ENCODE measurements at regions of chr17 and their contacts with region 1.

Region 1: GRCh38 chr17:44044067-44044466 is 22.4 kb downstream of the LSM12 start:
- DNase-seq: no peak
- ATAC-seq: no peak
- H3K4me3 ChIP-seq: no peak overlapping the region
- H3K4me3 Mint-ChIP-seq: no peak overlapping the region
- H3K27ac ChIP-seq: no peak overlapping the region
- H3K27ac Mint-ChIP-seq: no peak overlapping the region
- H3K4me1 ChIP-seq: no peaks in the 10 kb centered on the region
- H3K4me1 Mint-ChIP-seq: peaks cover 9% of the 10 kb centered on the region
- H3K27me3 ChIP-seq: no peaks in the 10 kb centered on the region
- H3K27me3 Mint-ChIP-seq: no peaks in the 10 kb centered on the region
- CTCF ChIP-seq: no peak

Region 2: DNA sequence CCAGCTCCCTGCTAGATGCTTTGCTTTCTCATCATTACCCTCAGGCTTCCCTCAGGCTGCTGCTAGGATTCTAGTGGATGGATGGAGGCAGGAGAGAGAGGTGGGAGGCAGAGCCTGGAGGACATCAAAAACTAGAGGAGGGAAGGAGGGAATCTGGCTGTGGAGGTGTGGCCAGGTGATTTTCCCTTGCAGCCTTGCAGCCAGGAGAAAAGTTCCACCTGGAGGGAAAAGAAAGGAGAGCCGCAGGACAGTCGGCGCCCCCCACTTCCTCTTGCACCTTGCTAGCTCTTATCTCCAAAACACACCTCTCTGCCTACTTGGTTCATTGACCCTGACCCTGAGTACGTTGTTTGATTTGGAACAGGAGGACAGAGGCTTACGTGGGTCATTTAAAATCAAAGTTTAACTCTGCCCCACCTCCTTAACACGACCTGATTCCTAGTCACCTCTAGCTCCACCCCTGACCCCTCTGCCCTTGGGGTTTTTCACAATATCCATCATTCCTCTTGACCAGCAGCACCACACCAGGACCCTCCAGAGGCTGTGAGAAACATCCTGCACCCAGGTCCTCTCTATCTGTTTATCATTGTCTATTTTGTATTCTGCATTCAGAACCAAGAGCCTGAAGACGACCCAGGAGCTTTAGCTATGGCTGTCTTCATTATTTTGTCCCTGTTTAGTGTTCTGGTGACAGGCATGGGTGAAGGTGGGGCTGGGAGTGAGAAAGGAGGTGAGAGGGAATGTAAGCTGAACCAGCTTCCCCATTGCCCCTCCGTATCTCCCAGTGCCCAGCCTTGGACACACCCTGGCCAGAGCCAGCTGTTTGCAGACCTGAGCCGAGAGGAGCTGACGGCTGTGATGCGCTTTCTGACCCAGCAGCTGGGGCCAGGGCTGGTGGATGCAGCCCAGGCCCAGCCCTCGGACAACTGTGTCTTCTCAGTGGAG is 1177.2 kb before region 1 on chr17:
- CTCF ChIA-PET with region 1: no interaction called
- POLR2A ChIA-PET with region 1: no interaction called
- intact Hi-C with region 1: no loop called
- DNase-seq: no peak
- ATAC-seq: no peak
- H3K4me3 ChIP-seq: no peak overlapping the region
- H3K4me3 Mint-ChIP-seq: no peak overlapping the region
- H3K27ac ChIP-seq: no peak overlapping the region
- H3K27ac Mint-ChIP-seq: no peak overlapping the region
- H3K4me1 ChIP-seq: no peaks in the 10 kb centered on the region
- H3K4me1 Mint-ChIP-seq: no peaks in the 10 kb centered on the region
- H3K27me3 ChIP-seq: peaks cover 0 to 11% (median 0%) of the 10 kb centered on the region in 4 experiments
- H3K27me3 Mint-ChIP-seq: peaks cover 27% of the 10 kb centered on the region
- CTCF ChIP-seq: no peak

Region 3: DNA sequence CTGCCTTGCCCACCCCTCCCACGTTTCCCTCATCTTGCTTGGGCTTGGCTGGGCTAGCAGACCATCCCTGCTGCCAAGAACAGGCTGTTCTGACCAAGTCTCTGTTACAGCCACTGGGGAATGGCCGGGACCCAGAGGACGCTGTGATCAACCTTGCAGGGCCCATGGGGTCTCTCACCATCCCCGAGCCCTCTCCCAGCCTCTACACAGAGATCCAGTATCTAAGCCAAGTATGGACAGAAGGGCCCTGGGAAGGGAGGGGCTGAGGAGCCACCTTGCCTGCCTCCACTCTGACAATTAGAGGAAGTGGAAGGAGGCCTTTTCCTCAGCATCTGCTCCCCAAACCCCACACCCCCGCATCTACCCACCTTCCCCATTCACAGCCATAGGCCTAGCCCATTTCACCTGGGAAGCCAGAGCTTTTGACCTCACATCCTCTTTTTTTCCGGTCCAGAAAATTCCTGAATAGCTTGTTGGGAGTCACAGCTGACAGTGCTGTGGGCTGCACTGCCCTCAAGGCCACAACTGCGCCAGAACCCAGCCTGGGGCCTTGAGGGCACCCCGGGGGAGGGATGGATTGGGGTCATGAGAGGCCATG is 182.9 kb before region 1 on chr17:
- CTCF ChIA-PET with region 1: no interaction called
- POLR2A ChIA-PET with region 1: no interaction called
- intact Hi-C with region 1: no loop called
- DNase-seq: no peak
- ATAC-seq: no peak
- H3K4me3 ChIP-seq: no peak overlapping the region
- H3K4me3 Mint-ChIP-seq: no peak overlapping the region
- H3K27ac ChIP-seq: no peak overlapping the region
- H3K27ac Mint-ChIP-seq: no peak overlapping the region
- H3K4me1 ChIP-seq: no peaks in the 10 kb centered on the region
- H3K4me1 Mint-ChIP-seq: no peaks in the 10 kb centered on the region
- H3K27me3 ChIP-seq: peaks cover 0 to 23% (median 2%) of the 10 kb centered on the region in 4 experiments
- H3K27me3 Mint-ChIP-seq: peaks cover 38% of the 10 kb centered on the region
- CTCF ChIP-seq: no peak

Region 4: GRCh38 chr17:43878260-43879175 is 165.5 kb before region 1 on chr17:
- CTCF ChIA-PET with region 1: interaction called, 11 read pairs
- POLR2A ChIA-PET with region 1: no interaction called
- intact Hi-C with region 1: no loop called
- DNase-seq: peak; percentile 76
- ATAC-seq: peak; percentile 93
- H3K4me3 ChIP-seq: no peak overlapping the region
- H3K4me3 Mint-ChIP-seq: no peak overlapping the region
- H3K27ac ChIP-seq: no peak overlapping the region
- H3K27ac Mint-ChIP-seq: no peak overlapping the region
- H3K4me1 ChIP-seq: peaks cover 0 to 3% of the 10 kb centered on the region in 2 donors
- H3K4me1 Mint-ChIP-seq: no peaks in the 10 kb centered on the region
- H3K27me3 ChIP-seq: peaks cover 0 to 22% (median 3%) of the 10 kb centered on the region in 4 experiments
- H3K27me3 Mint-ChIP-seq: peaks cover 26% of the 10 kb centered on the region
- CTCF ChIP-seq: peak; percentile 98

Region 5: GRCh38 chr17:43909537-43910231 is 134.4 kb before region 1 on chr17:
- CTCF ChIA-PET with region 1: interaction called, 8 read pairs
- POLR2A ChIA-PET with region 1: no interaction called
- intact Hi-C with region 1: loop called (anchors 1 kb)
- DNase-seq: no peak
- ATAC-seq: no peak
- H3K4me3 ChIP-seq: no peak overlapping the region
- H3K4me3 Mint-ChIP-seq: no peak overlapping the region
- H3K27ac ChIP-seq: no peak overlapping the region
- H3K27ac Mint-ChIP-seq: peak overlapping the region; percentile 26
- H3K4me1 ChIP-seq: peaks cover 27 to 32% of the 10 kb centered on the region in 2 donors
- H3K4me1 Mint-ChIP-seq: peaks cover 26% of the 10 kb centered on the region
- H3K27me3 ChIP-seq: peaks cover 0 to 46% (median 27%) of the 10 kb centered on the region in 4 experiments
- H3K27me3 Mint-ChIP-seq: peaks cover 35% of the 10 kb centered on the region
- CTCF ChIP-seq: no peak

Region 6: GRCh38 chr17:43946069-43946696 is 97.9 kb before region 1 on chr17:
- CTCF ChIA-PET with region 1: interaction called, 180 read pairs
- POLR2A ChIA-PET with region 1: interaction called, 5 read pairs
- intact Hi-C with region 1: no loop called
- DNase-seq: no peak
- ATAC-seq: no peak
- H3K4me3 ChIP-seq: no peak overlapping the region
- H3K4me3 Mint-ChIP-seq: no peak overlapping the region
- H3K27ac ChIP-seq: no peak overlapping the region
- H3K27ac Mint-ChIP-seq: no peak overlapping the region
- H3K4me1 ChIP-seq: no peaks in the 10 kb centered on the region
- H3K4me1 Mint-ChIP-seq: no peaks in the 10 kb centered on the region
- H3K27me3 ChIP-seq: peaks cover 0 to 7% (median 0%) of the 10 kb centered on the region in 4 experiments
- H3K27me3 Mint-ChIP-seq: peaks cover 46% of the 10 kb centered on the region
- CTCF ChIP-seq: no peak

Region 7: GRCh38 chr17:44006598-44007345 is 37.3 kb before region 1 on chr17:
- CTCF ChIA-PET with region 1: interaction called, 4 read pairs
- POLR2A ChIA-PET with region 1: interaction called, 6 read pairs
- intact Hi-C with region 1: loop called (anchors 2 kb)
- DNase-seq: peak; percentile 96
- ATAC-seq: peak; percentile 91
- H3K4me3 ChIP-seq: peak overlapping the region; percentile 53 to 84 (median 77)
- H3K4me3 Mint-ChIP-seq: peak overlapping the region; percentile 95
- H3K27ac ChIP-seq: peak overlapping the region in 1 of 2 donors; percentile 33
- H3K27ac Mint-ChIP-seq: peak overlapping the region; percentile 68
- H3K4me1 ChIP-seq: peaks cover 37 to 42% of the 10 kb centered on the region in 2 donors
- H3K4me1 Mint-ChIP-seq: peaks cover 33% of the 10 kb centered on the region
- H3K27me3 ChIP-seq: peaks cover 0 to 28% (median 11%) of the 10 kb centered on the region in 4 experiments
- H3K27me3 Mint-ChIP-seq: peaks cover 13% of the 10 kb centered on the region
- CTCF ChIP-seq: peak; percentile 69